ENCODE measurements at regions of chr14 and their contacts with region 1.

Region 1: DNA sequence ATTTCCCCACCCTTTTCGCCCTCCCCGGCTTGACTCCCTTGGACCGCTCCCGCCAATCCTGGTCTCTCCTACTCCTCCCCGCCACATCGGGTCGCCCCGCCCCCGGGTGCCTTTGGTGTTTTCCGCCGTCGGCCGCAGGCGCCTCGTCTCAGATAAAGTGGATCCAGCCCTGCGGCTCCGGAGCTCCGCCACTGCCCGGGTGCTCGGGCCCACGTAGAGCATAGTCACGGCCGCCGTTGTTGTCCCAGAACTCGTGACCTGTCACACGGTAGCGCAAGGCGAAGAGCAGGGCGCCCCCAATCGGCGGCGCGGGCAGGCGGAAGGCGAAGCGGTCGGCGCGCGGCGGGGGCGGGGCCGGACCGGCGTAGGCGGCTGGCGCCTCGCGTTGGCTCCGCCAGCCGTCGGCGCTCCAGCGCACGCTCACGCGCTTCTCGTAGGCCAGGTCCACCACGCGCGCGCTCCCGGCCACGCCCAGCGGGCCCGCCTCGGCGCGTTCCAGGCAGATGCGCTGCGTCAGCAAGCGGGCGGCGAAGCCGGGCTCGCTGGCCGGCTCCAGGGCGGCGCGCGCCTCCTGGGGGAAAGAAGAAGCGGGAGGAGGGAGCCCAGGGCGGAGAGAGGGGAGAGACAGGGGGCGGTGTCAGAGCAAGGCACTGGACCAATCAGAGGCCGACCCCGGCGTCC is 1.2 kb downstream of the PPP1R3E start:
- DNase-seq: peak; percentile 96 to 97
- ATAC-seq: peak; percentile 82 to 89
- H3K4me3 ChIP-seq: peak overlapping the region; percentile 63
- H3K27ac ChIP-seq: peak overlapping the region; percentile 92
- H3K4me1 ChIP-seq: peaks cover 23% of the 10 kb centered on the region
- CTCF ChIP-seq: peak; percentile 92
- EP300 ChIP-seq: no peak
- POLR2A ChIP-seq: peak; percentile 45
- RAD21 ChIP-seq: no peak; a peak in 2 of 5 replicates

Region 2: DNA sequence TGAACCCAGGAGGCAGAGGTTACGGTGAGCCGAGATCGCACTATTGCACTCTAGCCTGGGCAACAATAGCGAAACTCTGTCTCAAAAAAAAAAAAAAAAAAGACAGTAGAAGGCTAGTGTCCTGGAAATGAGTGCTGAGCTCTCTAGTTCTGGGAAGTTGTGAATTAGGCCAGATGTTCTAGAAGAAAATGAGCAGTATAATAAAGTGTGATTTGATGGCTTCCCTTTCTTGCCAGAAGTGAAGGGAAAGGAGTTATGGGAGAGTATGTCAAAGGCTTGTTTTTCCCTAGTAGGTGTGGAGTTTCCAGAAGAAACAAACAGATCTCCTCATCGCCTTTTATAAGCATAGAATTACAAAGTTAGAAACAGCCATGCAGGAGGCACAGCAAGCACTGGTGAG is 43.2 kb before region 1 on chr14:
- CTCF ChIA-PET with region 1: interaction called, 254 read pairs
- POLR2A ChIA-PET with region 1: interaction called, 5 read pairs
- DNase-seq: no peak
- ATAC-seq: no peak
- H3K4me3 ChIP-seq: no peak overlapping the region
- H3K27ac ChIP-seq: no peak overlapping the region
- H3K4me1 ChIP-seq: no peaks in the 10 kb centered on the region
- CTCF ChIP-seq: no peak
- EP300 ChIP-seq: no peak
- POLR2A ChIP-seq: no peak
- RAD21 ChIP-seq: no peak

Region 3: GRCh38 chr14:23286020-23286905 is 15.2 kb before region 1 on chr14 and contains the start of gene HOMEZ:
- CTCF ChIA-PET with region 1: interaction called, 161 read pairs
- POLR2A ChIA-PET with region 1: interaction called, 19 read pairs
- DNase-seq: peak; percentile 98
- ATAC-seq: peak; percentile 98 to 99
- H3K4me3 ChIP-seq: peak within 1 kb of the TSS; percentile 96
- H3K27ac ChIP-seq: peak within 1 kb of the TSS; percentile 95
- H3K4me1 ChIP-seq: peaks cover 18% of the 10 kb centered on the region
- CTCF ChIP-seq: no peak
- EP300 ChIP-seq: no peak
- POLR2A ChIP-seq: peak; percentile 61
- RAD21 ChIP-seq: no peak
- polyA plus RNA-seq, gene HOMEZ: 9.2 and 11.7 TPM in 2 replicates

Region 4: GRCh38 chr14:23335623-23336022 is 34.2 kb after region 1 on chr14:
- CTCF ChIA-PET with region 1: no interaction called
- POLR2A ChIA-PET with region 1: no interaction called
- DNase-seq: no peak
- ATAC-seq: no peak
- H3K4me3 ChIP-seq: no peak overlapping the region
- H3K27ac ChIP-seq: no peak overlapping the region
- H3K4me1 ChIP-seq: no peaks in the 10 kb centered on the region
- CTCF ChIP-seq: no peak
- EP300 ChIP-seq: no peak
- POLR2A ChIP-seq: no peak
- RAD21 ChIP-seq: no peak

Region 5: GRCh38 chr14:23518709-23519108 is 217.3 kb after region 1 on chr14:
- CTCF ChIA-PET with region 1: no interaction called
- POLR2A ChIA-PET with region 1: no interaction called
- DNase-seq: no peak
- ATAC-seq: no peak
- H3K4me3 ChIP-seq: no peak overlapping the region
- H3K27ac ChIP-seq: no peak overlapping the region
- H3K4me1 ChIP-seq: no peaks in the 10 kb centered on the region
- CTCF ChIP-seq: no peak
- EP300 ChIP-seq: no peak
- POLR2A ChIP-seq: no peak
- RAD21 ChIP-seq: no peak